ENCODE measurements at regions of chr9 and their contacts with region 1.

Region 1: GRCh38 chr9:134171316-134172197 is 7.2 kb upstream of the RNU6ATAC start:
- DNase-seq: no peak

Region 2: GRCh38 chr9:133845440-133845839 is 326.1 kb before region 1 on chr9:
- intact Hi-C with region 1: no loop called
- DNase-seq: peak; percentile 95

Region 3: GRCh38 chr9:134443168-134444037 is 271.8 kb after region 1 on chr9:
- intact Hi-C with region 1: loop called (anchors 2 kb)
- DNase-seq: peak; percentile 96

Region 4: DNA sequence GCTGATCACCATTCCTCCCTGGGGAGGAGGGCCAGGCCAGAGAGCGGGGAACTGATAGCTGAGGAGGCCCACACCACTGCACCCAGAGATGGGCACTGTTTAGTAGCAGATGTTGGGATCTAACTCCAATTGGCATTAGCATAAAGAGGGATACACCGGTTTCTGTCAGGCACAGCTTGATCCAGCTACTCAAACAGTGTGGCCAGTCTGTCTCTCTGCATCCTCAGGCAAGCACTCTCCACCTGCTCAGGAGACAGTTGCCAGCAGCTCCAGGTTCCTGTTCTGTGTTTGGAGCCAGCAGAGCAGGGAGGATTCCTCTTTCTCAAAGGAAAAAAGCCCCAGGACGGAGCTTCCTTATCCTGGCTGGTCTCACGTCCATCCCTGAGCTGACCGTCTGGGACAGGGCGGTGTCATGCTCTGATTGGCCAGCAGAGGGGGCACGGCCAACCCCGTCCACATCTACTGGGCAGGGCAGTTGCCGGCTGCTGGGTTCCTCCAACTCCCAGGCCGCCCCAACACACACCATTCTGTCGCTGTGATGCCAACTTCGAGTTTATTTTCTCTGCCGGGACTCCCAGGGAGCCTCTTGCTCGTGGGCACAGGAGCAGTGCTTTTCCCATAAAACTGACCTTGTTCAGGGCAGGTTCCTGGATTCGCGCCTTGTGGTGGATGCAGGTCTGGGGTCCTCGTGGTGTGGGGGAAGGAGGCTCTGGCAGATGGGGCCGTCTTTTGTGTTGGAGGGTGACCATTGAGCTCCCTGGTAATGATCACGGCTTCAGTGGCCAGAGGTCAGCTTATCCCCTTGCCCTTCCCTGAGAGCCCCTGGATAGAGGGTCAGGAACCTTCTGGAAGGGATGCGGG is 518.0 kb after region 1 on chr9:
- intact Hi-C with region 1: loop called in 1 of 2 experiments (anchors 2 kb)
- DNase-seq: peak; percentile 90

Measured in posterior vena cava (tissue), 2 donors.